Naive thymus-derived CD4-positive, alpha-beta T cell (primary cell): ENCODE measurements at regions of chr4 and their contacts with region 1.

Region 1: DNA sequence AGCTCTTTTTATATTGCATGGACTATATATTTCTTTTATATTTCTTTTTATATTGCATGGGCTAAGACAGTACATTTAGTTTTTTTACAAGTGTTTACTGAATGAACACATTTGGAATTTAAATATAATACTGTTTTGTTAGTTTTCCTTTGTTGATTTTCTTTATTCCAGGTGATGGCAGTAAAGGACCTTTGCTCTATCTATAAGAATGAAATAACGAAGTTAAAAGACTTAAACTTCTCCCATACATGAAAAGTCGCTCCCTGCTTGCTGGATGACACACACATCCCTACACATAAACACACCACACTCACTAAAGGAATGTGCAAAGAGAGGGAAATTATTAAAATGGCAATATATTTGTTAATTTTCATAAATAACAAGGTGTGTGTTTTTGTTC is 102.5 kb upstream of the ANXA10 start:
- DNase-seq: no peak
- ATAC-seq: no peak
- H3K4me3 ChIP-seq: no peak overlapping the region
- H3K4me3 Mint-ChIP-seq: no peak overlapping the region
- H3K27ac ChIP-seq: no peak overlapping the region
- H3K27ac Mint-ChIP-seq: no peak overlapping the region
- H3K4me1 ChIP-seq: no peaks in the 10 kb centered on the region
- H3K4me1 Mint-ChIP-seq: no peaks in the 10 kb centered on the region
- H3K27me3 ChIP-seq: no peaks in the 10 kb centered on the region
- H3K27me3 Mint-ChIP-seq: no peaks in the 10 kb centered on the region

Region 2: DNA sequence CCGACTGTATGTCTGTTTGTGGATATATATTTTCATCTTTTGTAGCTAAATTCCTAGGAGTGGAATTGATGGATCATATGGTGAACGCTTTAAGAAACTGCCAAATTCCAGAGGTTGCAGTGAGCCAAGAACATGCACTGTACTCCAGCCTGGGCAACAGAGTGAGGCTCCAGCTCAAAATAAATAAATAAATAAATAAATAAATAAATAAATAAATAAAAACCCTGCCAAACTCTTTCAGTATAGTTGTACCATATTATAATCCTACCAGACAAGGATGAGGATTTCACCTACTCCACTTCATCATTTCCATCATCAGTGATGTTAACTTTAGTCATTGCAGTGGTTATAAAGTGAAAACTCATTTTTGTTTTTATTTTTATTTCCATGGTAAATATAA is 222.5 kb before region 1 on chr4:
- CTCF ChIA-PET with region 1: no interaction called
- POLR2A ChIA-PET with region 1: no interaction called
- intact Hi-C with region 1: loop called in 1 of 2 experiments (anchors 10 kb)
- DNase-seq: no peak
- ATAC-seq: no peak
- H3K4me3 ChIP-seq: no peak overlapping the region
- H3K4me3 Mint-ChIP-seq: no peak overlapping the region
- H3K27ac ChIP-seq: no peak overlapping the region
- H3K27ac Mint-ChIP-seq: no peak overlapping the region
- H3K4me1 ChIP-seq: no peaks in the 10 kb centered on the region
- H3K4me1 Mint-ChIP-seq: no peaks in the 10 kb centered on the region
- H3K27me3 ChIP-seq: no peaks in the 10 kb centered on the region
- H3K27me3 Mint-ChIP-seq: no peaks in the 10 kb centered on the region